Gastrocnemius medialis (tissue), 4 donors: ENCODE measurements at regions of chr9 and their contacts with region 1.

Region 1: DNA sequence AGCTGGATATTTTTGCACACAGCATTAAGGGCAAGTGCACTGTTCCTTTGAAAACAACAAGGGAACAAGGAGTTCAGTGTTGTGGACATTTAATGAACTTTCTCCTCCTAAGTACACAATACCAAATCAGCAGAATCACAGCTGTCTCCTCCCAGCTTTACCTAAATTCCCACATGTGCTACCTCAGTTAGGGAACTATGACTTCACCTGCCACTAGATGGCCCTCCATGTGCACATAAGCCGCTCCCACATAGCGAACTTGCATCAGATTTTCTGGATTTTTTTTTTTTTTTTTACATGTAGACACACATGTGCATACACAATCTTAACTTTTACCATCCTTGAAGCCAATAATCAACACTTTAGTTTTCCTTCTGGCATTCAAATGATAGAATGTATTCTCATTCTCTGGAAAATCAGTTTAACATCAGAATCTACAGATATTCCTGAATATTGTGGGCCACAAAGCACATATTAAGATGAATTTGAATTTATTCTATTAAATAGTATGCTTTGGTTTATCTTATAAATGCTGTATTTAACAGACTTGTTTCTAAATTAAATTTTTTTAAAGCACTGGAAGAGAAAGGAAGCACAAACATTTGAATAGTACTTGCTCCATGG is 123.6 kb downstream of the PALM2AKAP2 start:
- DNase-seq: peak in 1 of 2 donors; percentile 45
- ATAC-seq: peak; percentile 51 to 59
- H3K4me3 ChIP-seq: no peak overlapping the region
- H3K27ac ChIP-seq: peak overlapping the region in 2 of 4 donors; percentile 7 to 21
- H3K4me1 ChIP-seq: peaks cover 17 to 49% of the 10 kb centered on the region in 2 donors
- H3K27me3 ChIP-seq: no peaks in the 10 kb centered on the region
- CTCF ChIP-seq: peak; percentile 73 to 83 (median 82)
- POLR2A ChIP-seq: no peak

Region 2: GRCh38 chr9:109940561-109940960 is 36.9 kb after region 1 on chr9:
- in situ Hi-C with region 1: no loop called
- intact Hi-C with region 1: no loop called
- DNase-seq: no peak
- ATAC-seq: no peak
- H3K4me3 ChIP-seq: no peak overlapping the region
- H3K27ac ChIP-seq: no peak overlapping the region
- H3K4me1 ChIP-seq: no peaks in the 10 kb centered on the region
- H3K27me3 ChIP-seq: no peaks in the 10 kb centered on the region
- CTCF ChIP-seq: no peak
- POLR2A ChIP-seq: no peak

Region 3: DNA sequence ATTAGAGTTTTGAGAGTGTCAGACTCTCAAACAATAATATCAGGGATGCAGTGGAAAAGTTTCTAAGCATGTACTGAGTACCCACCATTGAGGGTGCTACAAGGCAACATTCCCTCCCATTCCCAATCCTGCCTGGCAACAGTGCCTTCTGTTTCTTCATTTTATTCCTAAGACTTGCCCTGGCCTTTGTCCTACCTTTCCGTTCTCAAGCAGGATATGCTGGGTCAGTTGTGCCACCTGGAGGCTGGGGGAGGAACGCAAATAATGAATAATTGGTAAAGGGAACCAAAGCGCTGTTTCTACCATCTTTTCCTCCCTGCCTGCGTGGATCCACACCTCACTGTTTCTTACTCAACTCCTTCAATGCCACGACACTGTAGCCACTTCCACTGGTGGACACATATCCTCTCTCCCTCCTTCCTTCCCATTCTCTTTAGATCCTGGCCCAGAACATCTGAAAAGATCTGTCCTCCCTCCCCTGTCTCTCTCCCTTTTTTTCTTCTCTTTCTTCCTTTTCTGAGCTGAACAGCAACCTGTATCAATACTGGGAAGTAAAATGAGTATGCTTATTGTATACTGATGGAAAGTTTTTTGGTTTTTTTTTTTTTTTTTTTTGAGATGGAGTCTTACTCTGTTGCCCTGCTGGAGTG is 154.8 kb after region 1 on chr9:
- in situ Hi-C with region 1: loop called (anchors 5 kb)
- intact Hi-C with region 1: loop called (anchors 1 kb)
- DNase-seq: peak; percentile 14 to 35
- ATAC-seq: peak; percentile 68 to 78
- H3K4me3 ChIP-seq: no peak overlapping the region
- H3K27ac ChIP-seq: peak overlapping the region in 2 of 4 donors; percentile 6 to 36
- H3K4me1 ChIP-seq: peaks cover 6 to 22% of the 10 kb centered on the region in 2 donors
- H3K27me3 ChIP-seq: no peaks in the 10 kb centered on the region
- CTCF ChIP-seq: peak; percentile 59 to 79 (median 62)
- POLR2A ChIP-seq: no peak

Region 4: DNA sequence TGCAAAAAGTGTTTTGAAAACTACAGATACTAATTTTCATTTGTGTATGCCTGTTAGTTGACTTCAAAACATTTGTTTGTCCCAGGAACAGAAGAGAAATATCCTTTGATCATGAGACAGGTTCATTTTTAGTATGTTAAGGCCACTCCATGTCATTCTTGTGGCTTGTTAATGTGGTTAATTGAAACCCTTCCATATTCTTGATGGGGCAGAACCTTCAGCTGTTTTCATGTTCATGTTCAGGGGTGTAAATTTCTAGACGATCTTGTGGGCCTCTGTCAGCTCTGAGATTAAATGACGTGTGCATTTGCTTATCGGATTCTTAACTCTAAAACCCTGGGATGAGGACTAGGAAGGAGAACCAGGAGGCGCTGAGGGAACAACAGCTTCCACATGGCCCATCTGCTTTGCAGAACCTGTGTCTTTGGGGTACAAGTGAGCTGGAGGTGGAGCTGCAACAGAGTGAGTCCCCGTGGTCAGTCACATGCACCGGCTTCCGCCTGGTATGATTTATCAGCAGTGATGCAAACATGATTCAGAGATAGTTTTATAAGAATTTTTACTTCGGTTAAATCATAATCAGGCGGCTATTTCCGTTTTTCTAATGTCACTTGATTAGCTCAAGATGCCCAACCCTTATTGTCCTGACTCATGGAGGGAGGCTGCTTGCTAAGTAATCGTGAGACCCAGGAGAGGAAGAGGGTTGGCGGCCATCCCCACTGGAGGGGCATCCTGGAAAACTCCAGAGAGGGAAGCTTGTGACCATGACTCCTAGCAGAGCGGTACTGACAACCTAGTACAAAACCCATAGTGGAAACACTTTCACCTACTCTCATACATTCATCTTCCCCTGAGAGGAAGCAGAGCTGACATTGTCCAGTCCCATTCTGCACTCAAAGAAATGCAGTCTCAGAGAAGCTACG is 166.0 kb after region 1 on chr9:
- in situ Hi-C with region 1: no loop called
- intact Hi-C with region 1: no loop called
- DNase-seq: no peak
- ATAC-seq: peak; percentile 24 to 45
- H3K4me3 ChIP-seq: no peak overlapping the region
- H3K27ac ChIP-seq: peak overlapping the region; percentile 18 to 60 (median 32)
- H3K4me1 ChIP-seq: peaks cover 34 to 44% of the 10 kb centered on the region in 2 donors
- H3K27me3 ChIP-seq: no peaks in the 10 kb centered on the region
- CTCF ChIP-seq: no peak
- POLR2A ChIP-seq: no peak

Region 5: DNA sequence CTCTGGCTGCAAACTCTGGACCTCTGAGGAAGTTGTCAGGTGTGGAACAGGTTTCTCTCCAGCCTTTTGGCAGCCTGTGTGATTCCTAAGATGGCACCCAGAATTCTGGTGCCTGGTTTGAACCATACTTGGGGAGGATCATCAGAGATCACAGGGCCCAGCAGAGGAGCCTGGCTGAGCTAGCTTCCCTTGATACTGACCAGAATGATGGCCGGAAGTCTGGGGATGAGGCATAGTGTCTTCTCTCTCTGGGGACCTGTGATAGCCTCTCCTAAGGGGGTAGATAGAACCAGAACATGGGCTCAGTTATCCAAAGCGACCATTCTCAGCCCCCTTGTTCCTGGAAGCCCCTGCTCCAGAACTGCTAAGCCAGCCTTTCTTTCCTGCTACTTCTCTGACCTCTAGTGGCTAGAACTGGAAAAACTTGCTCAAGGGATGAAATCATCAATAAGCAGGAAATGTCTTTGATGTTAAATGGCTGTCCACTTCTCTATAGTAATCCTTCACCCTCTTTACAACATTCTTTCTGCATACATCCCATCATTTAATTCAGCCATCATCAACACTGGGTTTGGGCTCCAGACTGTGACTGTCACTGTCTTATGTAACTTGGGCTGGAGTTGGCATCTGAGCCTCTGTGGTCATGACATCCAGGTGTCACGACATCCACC is 249.2 kb after region 1 on chr9:
- in situ Hi-C with region 1: loop called (anchors 5 to 10 kb)
- intact Hi-C with region 1: loop called (anchors 2 kb)
- DNase-seq: no peak
- ATAC-seq: no peak
- H3K4me3 ChIP-seq: no peak overlapping the region
- H3K27ac ChIP-seq: peak overlapping the region in 2 of 4 donors; percentile 22 to 29
- H3K4me1 ChIP-seq: peaks cover 13 to 16% of the 10 kb centered on the region in 2 donors
- H3K27me3 ChIP-seq: no peaks in the 10 kb centered on the region
- CTCF ChIP-seq: peak; percentile 53 to 71 (median 62)
- POLR2A ChIP-seq: no peak

Region 6: DNA sequence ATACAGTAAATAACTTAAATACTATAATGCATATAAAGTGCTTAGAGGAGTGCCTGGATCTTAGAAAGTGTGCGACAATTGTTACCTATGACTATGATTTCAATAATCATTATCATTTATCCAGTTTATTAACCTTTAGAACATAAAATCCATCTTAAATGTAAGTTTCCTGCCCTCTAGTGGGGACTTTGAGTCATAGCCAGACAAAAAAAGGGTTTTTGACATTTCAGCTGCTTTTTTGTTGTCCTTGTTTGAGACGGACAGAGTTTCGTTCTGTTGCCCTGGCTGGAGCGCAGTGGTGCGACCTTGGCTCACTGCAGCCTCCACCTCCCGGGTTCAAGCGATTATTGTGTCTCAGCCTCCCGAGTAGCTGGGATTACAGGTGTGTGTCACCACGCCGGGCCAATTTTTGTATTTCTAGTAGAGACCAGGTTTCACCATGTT is 314.1 kb after region 1 on chr9:
- in situ Hi-C with region 1: loop called in 2 of 4 experiments (anchors 10 kb)
- intact Hi-C with region 1: loop called (anchors 5 kb)
- DNase-seq: no peak
- ATAC-seq: no peak
- H3K4me3 ChIP-seq: no peak overlapping the region
- H3K27ac ChIP-seq: no peak overlapping the region
- H3K4me1 ChIP-seq: no peaks in the 10 kb centered on the region
- H3K27me3 ChIP-seq: no peaks in the 10 kb centered on the region
- CTCF ChIP-seq: peak; percentile 42 to 78 (median 66)
- POLR2A ChIP-seq: no peak